PC-9 (cell line): ENCODE measurements at regions of chr10 and their contacts with region 1.

Region 1: DNA sequence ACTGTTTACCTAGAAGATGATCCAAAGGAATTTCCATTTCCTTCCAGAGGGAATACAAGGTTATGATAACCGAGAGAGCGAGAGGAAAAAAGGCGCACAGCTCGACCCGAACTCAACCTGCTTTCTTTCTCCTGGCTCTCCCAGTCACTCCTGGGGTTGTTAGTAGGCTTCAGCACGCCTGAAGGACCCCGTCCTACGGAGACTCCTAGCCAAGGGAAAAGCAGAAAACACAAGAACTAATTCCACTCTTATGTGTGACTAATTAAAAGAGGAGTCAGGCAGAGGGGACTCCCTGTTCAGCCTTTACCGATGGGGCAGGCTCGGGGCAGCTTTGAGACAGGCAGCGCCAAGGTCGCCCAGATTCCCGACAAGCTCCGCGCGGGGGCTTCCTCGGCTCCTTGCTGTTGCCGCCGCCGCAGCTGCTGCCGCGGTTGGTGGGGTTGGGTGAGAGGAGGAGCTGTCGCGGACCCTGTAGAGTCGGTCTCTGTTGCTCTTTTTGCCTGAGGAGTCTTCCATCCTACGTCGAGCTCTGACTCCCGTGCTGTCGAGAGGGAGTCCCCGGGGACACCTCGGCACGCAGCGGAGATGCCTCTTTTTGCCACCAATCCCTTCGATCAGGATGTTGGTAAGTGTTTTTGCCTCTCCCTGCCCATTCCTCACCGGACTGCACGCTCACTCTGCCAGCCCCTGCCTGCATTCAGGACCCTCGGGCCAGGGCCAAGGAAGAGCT is at the start of gene STAM:
- DNase-seq: peak; percentile 76 to 90
- H3K4me3 ChIP-seq: peak within 1 kb of the TSS; percentile 96
- H3K27ac ChIP-seq: peak within 1 kb of the TSS; percentile 91
- H3K4me1 ChIP-seq: peaks cover 30% of the 10 kb centered on the region
- H3K27me3 ChIP-seq: no peaks in the 10 kb centered on the region
- CTCF ChIP-seq: no peak
- total RNA-seq, gene STAM: 37.0 and 38.8 TPM in 2 replicates

Region 2: DNA sequence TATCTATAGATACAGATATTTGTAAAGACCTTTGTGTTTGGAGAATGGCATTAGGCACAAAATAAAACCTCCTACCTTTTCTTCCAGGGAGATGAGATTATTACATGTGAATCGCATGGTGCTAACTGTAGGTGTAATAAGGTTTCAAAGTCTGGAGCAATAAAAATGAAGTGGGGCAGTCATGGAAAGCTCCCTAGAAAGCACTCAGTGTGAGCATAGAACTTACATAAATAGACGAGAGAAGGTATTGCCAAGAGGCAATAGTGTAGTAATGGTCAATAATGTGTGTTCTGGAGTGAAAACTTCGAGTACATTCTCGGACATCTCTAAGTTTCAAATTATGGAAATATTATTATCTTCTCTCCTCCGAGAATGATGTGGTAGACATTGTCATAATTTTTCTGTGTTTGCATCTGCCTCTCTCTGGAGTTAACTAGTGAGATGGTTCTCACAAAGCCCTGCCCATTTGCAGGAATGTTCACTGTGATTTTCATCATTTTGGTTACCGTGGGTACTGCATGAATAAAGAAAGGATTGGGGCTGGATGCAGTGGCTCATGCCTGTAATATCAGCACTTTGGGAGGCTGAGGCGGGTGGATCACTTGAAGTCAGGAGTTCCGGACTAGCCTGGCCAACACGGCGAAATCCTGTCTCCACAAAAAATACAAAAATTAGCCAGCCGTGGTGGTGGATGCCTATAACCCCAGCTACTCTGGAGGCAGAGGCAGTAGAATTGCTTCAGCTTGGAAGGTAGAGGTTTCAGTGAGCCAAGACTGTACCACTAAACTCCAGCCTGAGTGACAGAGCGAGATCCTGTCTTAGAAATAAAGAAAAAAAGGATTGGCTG is 405.3 kb before region 1 on chr10:
- CTCF ChIA-PET with region 1: no interaction called
- POLR2A ChIA-PET with region 1: no interaction called
- intact Hi-C with region 1: no loop called
- DNase-seq: no peak
- H3K4me3 ChIP-seq: no peak overlapping the region
- H3K27ac ChIP-seq: no peak overlapping the region
- H3K4me1 ChIP-seq: no peaks in the 10 kb centered on the region
- H3K27me3 ChIP-seq: no peaks in the 10 kb centered on the region
- CTCF ChIP-seq: no peak

Region 3: GRCh38 chr10:17353559-17354300 is 290.2 kb before region 1 on chr10:
- CTCF ChIA-PET with region 1: no interaction called
- POLR2A ChIA-PET with region 1: no interaction called
- intact Hi-C with region 1: no loop called
- DNase-seq: peak in 1 of 2 experiments; percentile 81
- H3K4me3 ChIP-seq: peak overlapping the region; percentile 22; the same call in 1 of the 2 replicates
- H3K27ac ChIP-seq: peak overlapping the region; percentile 69
- H3K4me1 ChIP-seq: peaks cover 57% of the 10 kb centered on the region
- H3K27me3 ChIP-seq: no peaks in the 10 kb centered on the region
- CTCF ChIP-seq: no peak

Region 4: DNA sequence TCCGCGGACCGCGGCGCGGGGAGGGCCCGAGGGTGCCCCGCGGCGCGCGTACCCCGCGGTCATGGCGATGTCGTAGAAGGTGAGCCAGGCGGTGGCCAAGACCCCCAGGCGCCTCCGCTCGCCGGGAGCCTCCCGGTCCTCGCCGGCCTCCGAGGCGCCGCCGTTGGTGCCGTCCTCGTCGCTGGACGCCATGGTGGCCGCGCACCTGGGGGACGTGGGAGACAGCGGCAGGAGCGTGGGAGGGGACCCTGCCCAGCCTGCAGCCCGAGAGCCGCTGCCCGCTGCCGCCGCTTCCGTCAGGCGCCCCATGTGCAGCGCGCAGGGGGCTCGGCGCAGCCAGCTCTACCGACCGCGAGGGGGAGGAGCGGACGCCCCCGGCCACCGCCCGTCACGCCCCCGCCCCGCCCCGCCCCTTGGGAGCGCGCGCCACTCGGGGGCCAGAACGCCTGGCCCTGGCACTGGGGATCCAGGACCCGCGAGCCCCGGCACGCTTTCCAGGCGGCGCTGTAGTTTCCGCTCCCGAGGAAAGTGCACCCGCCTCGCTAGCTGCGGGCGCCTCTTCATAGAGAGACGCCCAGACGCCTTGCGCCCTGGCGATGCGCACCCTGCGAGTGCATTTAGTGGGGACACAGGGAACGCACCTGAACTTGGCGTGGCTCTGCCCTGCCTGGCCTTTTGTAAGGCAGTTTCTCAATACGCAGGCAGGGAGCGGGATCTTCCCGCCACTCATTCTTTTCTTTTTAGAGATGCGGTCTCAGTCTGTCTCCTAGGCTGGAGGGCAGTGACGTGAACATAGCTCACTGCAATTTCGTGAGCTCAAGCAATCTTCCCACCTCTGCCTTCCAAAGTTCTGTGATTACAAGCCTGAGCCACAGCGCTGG is 26.6 kb before region 1 on chr10 and contains the start of gene HACD1:
- CTCF ChIA-PET with region 1: interaction called, 4 read pairs
- POLR2A ChIA-PET with region 1: no interaction called
- intact Hi-C with region 1: loop called (anchors 1 kb)
- DNase-seq: peak; percentile 46 to 81
- H3K4me3 ChIP-seq: peak within 1 kb of the TSS; percentile 77
- H3K27ac ChIP-seq: peak within 1 kb of the TSS; percentile 65
- H3K4me1 ChIP-seq: no peaks in the 10 kb centered on the region
- H3K27me3 ChIP-seq: no peaks in the 10 kb centered on the region
- CTCF ChIP-seq: no peak; the same call in 1 of the 2 replicates
- total RNA-seq, gene HACD1: 29.6 and 36.3 TPM in 2 replicates

Region 5: GRCh38 chr10:17626656-17627055 is 17.3 kb before region 1 on chr10:
- CTCF ChIA-PET with region 1: no interaction called
- POLR2A ChIA-PET with region 1: interaction called, 30 read pairs
- intact Hi-C with region 1: no loop called
- DNase-seq: no peak
- H3K4me3 ChIP-seq: no peak overlapping the region
- H3K27ac ChIP-seq: no peak overlapping the region
- H3K4me1 ChIP-seq: no peaks in the 10 kb centered on the region
- H3K27me3 ChIP-seq: no peaks in the 10 kb centered on the region
- CTCF ChIP-seq: no peak

Region 6: DNA sequence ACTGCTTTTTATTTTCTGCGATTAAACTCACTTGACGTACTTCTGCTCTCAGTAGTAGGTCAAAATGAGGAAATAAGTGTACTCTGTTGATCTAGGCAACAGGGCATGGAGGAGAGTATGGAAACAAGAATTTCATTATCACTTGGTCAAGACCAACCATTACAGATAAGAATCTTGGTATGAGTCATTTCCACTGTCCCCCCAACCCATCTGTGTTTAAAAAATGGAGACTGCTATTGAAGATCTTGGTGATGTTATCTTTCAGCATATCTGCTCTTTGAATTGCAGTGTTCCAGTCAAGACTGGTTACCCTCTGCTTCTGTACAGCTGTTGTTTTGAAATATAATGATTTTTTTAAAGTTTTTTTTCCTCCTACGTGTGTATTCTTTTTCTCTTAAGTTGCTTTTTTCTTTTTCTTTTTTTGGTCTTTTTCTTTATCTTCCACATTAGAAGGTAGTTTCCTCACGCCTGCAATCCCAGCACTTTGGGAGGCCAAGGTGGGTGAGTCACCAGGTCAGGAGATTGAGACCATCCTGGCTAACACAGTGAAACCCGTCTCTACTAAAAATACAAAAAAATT is 11.7 kb after region 1 on chr10:
- CTCF ChIA-PET with region 1: no interaction called
- POLR2A ChIA-PET with region 1: no interaction called
- intact Hi-C with region 1: loop called (anchors 1 kb)
- DNase-seq: peak; percentile 30 to 87
- H3K4me3 ChIP-seq: peak overlapping the region; percentile 24
- H3K27ac ChIP-seq: peak overlapping the region; percentile 85
- H3K4me1 ChIP-seq: peaks cover 39% of the 10 kb centered on the region
- H3K27me3 ChIP-seq: no peaks in the 10 kb centered on the region
- CTCF ChIP-seq: no peak

Region 7: DNA sequence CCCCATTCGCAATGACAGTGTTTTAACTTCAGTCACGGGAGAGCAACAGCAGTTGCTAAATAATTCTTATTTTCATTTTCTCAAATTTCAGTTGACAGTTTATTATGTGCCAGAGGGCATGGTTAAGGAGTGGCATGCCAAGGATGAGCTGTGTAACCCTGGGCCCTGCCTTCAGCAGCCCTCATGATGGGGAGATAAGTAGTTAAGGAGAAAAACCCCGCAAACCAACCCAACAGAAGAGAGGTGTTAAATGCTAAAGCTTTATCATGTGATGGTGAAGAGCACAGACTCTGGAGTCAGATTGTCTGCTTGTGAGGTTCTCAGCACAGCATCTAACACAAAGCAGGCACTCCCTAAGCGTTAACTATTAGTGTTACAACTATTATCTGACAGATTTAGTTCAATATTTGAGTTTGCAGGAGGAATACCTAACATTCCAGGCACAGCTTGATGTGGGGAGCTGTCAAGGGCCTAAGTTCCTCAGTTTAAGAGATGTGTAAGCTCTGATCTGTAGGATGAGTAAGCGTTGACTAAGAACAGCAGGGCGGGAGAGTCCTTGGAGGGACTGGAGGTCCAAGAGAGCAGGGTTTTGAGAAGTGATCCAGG is 29.6 kb after region 1 on chr10:
- CTCF ChIA-PET with region 1: no interaction called
- POLR2A ChIA-PET with region 1: interaction called, 9 read pairs
- intact Hi-C with region 1: loop called (anchors 2 kb)
- DNase-seq: peak; percentile 48 to 82
- H3K4me3 ChIP-seq: no peak overlapping the region; the same call in 1 of the 2 replicates
- H3K27ac ChIP-seq: peak overlapping the region; percentile 11
- H3K4me1 ChIP-seq: peaks cover 33% of the 10 kb centered on the region
- H3K27me3 ChIP-seq: no peaks in the 10 kb centered on the region
- CTCF ChIP-seq: no peak

Region 8: GRCh38 chr10:17682236-17682946 is 38.5 kb after region 1 on chr10:
- CTCF ChIA-PET with region 1: no interaction called
- POLR2A ChIA-PET with region 1: no interaction called
- intact Hi-C with region 1: loop called (anchors 1 kb)
- DNase-seq: no peak
- H3K4me3 ChIP-seq: no peak overlapping the region
- H3K27ac ChIP-seq: 0 out of 2 replicates have a peak overlapping the region, but pooled peaks have one; percentile 1
- H3K4me1 ChIP-seq: 0 out of 2 replicates have a peak, but pooled peaks cover 4% of the 10 kb centered on the region
- H3K27me3 ChIP-seq: no peaks in the 10 kb centered on the region
- CTCF ChIP-seq: no peak

Region 9: DNA sequence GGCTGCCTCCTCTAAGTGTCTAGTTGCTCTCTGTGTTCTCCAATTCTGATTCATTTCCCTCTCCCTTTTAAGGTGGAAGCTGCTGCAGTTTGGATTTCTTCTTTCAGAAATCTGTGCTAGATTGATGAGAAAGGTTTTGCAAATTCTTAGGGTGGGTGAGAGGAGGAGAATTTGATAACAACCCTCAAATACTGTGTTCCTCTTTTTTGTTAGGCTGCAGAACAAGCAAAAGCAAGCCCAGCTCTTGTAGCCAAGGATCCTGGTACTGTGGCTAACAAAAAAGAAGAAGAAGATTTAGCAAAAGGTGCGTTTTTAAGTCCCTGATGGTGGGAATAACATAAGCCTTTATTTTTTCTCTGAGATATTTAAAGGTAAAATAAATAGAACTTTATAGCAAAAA is 49.1 kb after region 1 on chr10:
- CTCF ChIA-PET with region 1: no interaction called
- POLR2A ChIA-PET with region 1: no interaction called
- intact Hi-C with region 1: no loop called
- DNase-seq: no peak
- H3K4me3 ChIP-seq: no peak overlapping the region
- H3K27ac ChIP-seq: no peak overlapping the region
- H3K4me1 ChIP-seq: no peaks in the 10 kb centered on the region
- H3K27me3 ChIP-seq: no peaks in the 10 kb centered on the region
- CTCF ChIP-seq: no peak

Region 10: DNA sequence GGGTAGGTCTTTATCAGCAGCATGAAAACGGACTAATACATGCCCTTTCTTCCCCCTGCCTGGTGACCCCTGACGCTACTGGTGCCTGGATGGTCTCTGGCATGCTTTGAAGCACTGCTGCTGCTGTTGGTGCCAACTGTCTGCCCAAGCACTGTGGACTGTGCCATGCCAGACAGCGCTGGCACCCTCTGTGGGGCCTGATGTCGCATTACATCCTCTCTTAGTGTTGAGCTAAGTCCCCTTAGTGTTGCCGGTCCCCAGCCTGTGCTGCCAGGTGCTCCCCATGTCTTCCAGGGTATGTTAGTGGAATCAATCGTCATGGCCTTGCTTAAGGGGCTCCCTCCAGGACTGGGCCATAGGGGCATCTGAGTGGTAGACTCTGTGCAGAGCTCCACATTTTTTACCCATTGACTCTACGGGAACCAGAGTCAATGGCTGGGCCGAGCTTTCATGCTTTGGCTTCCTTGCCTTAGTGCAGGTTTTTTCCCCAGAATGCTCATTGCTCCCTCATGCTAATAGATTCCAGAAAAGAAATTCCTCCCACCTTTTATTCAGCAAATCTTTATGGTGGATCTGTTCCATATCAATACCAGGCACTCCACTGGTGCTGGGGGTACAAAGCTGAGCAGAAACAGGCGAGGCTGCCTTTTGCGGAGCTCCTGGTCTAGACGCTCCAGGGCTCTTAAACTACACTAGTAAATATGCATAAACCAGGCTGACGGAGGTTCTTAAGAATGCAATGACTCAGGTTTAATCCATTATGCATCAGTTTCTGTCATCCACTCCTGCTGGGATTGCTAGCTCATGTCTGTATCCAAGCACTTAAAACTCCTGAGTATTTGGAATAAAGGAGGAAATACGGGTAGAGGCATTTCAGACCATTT is 143.4 kb after region 1 on chr10:
- CTCF ChIA-PET with region 1: interaction called, 3 read pairs
- POLR2A ChIA-PET with region 1: interaction called, 6 read pairs
- intact Hi-C with region 1: loop called (anchors 5 kb)
- DNase-seq: peak; percentile 54 to 86
- H3K4me3 ChIP-seq: no peak overlapping the region
- H3K27ac ChIP-seq: no peak overlapping the region
- H3K4me1 ChIP-seq: peaks cover 9% of the 10 kb centered on the region
- H3K27me3 ChIP-seq: no peaks in the 10 kb centered on the region
- CTCF ChIP-seq: no peak